PC-3 (cell line): ENCODE measurements at regions of chr5 and their contacts with region 1.

Region 1: GRCh38 chr5:81751009-81751835 is at the start of gene SSBP2:
- DNase-seq: peak; percentile 96
- ATAC-seq: peak; percentile 88
- H3K4me3 ChIP-seq: peak within 1 kb of the TSS; percentile 81
- H3K27ac ChIP-seq: peak within 1 kb of the TSS; percentile 65
- H3K4me1 ChIP-seq: peaks cover 18% of the 10 kb centered on the region
- H3K27me3 ChIP-seq: peaks cover 14% of the 10 kb centered on the region; the same call in 1 of the 2 replicates
- CTCF ChIP-seq: no peak
- total RNA-seq, gene SSBP2: 5.8 and 9.0 TPM in 2 replicates

Region 2: GRCh38 chr5:81334304-81335061 is 416.7 kb before region 1 on chr5:
- CTCF ChIA-PET with region 1: interaction called, 12 read pairs
- POLR2A ChIA-PET with region 1: no interaction called
- intact Hi-C with region 1: no loop called
- DNase-seq: no peak
- ATAC-seq: no peak
- H3K4me3 ChIP-seq: no peak overlapping the region
- H3K27ac ChIP-seq: no peak overlapping the region
- H3K4me1 ChIP-seq: no peaks in the 10 kb centered on the region
- H3K27me3 ChIP-seq: no peaks in the 10 kb centered on the region
- CTCF ChIP-seq: no peak

Region 3: DNA sequence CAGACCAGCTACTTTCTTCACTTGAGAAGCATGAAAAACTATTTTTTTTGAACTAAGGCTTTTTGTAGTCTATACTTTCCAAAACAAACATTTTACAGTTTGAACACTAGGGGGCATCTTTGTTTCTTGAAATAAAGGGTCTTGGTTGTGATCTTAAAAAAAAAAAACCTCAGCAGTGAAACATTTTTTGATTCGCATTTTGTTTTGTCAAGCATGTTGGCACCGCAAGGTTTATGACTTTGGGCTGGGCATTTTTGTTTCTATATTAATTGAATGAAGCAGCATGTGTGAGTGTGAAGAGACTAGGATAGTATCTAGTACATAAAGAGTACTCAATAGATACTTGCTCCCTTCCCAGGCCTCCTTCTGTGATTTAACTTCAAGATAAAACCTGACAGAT is 325.7 kb before region 1 on chr5:
- CTCF ChIA-PET with region 1: no interaction called
- POLR2A ChIA-PET with region 1: interaction called, 3 read pairs
- intact Hi-C with region 1: loop called (anchors 1 kb)
- DNase-seq: peak; percentile 52
- ATAC-seq: peak; percentile 7; the same call in 1 of the 2 replicates
- H3K4me3 ChIP-seq: no peak overlapping the region
- H3K27ac ChIP-seq: no peak overlapping the region
- H3K4me1 ChIP-seq: peaks cover 73% of the 10 kb centered on the region
- H3K27me3 ChIP-seq: no peaks in the 10 kb centered on the region
- CTCF ChIP-seq: peak; percentile 68

Region 4: GRCh38 chr5:81513982-81514381 is 237.2 kb before region 1 on chr5:
- CTCF ChIA-PET with region 1: no interaction called
- POLR2A ChIA-PET with region 1: no interaction called
- intact Hi-C with region 1: loop called (anchors 2 kb)
- DNase-seq: peak; percentile 34
- ATAC-seq: 0 out of 2 replicates have a peak, but pooled peaks have one; percentile 31
- H3K4me3 ChIP-seq: no peak overlapping the region
- H3K27ac ChIP-seq: no peak overlapping the region
- H3K4me1 ChIP-seq: no peaks in the 10 kb centered on the region; the same call in 1 of the 2 replicates
- H3K27me3 ChIP-seq: no peaks in the 10 kb centered on the region
- CTCF ChIP-seq: peak; percentile 53

Region 5: DNA sequence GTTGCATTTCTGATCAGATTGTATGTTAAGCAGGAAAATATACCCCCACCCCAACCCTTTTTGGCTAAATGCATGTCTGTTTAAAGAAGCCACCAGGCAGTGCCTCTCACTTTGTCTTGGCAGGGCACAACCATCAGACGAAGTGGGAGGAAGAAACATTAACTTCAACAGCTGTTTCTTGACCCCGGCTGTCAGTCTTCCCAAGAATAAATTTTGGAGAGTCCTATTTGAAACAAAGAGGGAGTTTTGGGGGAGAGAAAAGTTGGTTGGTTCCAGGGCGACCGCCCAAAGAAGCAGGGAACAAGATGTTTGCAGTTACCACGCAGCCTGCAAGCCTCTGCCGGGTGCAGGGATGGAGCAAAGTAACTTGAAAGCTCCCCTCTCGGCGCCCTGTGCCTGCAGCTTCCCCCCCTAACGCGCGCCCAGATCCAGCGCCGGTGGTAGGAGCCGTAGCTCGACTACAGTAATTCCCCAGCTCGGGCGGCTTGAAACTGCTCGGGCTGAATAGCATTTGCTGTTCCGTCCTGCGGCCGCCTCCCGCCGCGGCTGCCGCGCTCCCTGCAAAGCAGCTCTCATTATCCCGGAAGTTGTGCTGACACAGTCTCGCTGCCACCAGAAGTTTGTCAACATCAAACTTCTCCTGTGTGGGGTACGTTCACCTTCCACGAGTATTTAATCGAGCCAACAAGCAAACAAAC is 100.4 kb after region 1 on chr5:
- CTCF ChIA-PET with region 1: interaction called, 13 read pairs
- POLR2A ChIA-PET with region 1: interaction called, 9 read pairs
- intact Hi-C with region 1: loop called (anchors 1 kb)
- DNase-seq: peak; percentile 86
- ATAC-seq: peak; percentile 92
- H3K4me3 ChIP-seq: peak overlapping the region; percentile 67
- H3K27ac ChIP-seq: peak overlapping the region; percentile 71
- H3K4me1 ChIP-seq: peaks cover 10% of the 10 kb centered on the region
- H3K27me3 ChIP-seq: no peaks in the 10 kb centered on the region
- CTCF ChIP-seq: no peak

Region 6: GRCh38 chr5:82107267-82107666 is 356.0 kb after region 1 on chr5:
- CTCF ChIA-PET with region 1: no interaction called
- POLR2A ChIA-PET with region 1: no interaction called
- intact Hi-C with region 1: loop called (anchors 5 kb)
- DNase-seq: peak; percentile 30
- ATAC-seq: peak; percentile 56; the same call in 1 of the 2 replicates
- H3K4me3 ChIP-seq: no peak overlapping the region
- H3K27ac ChIP-seq: no peak overlapping the region
- H3K4me1 ChIP-seq: no peaks in the 10 kb centered on the region
- H3K27me3 ChIP-seq: no peaks in the 10 kb centered on the region
- CTCF ChIP-seq: peak; percentile 76

Region 7: DNA sequence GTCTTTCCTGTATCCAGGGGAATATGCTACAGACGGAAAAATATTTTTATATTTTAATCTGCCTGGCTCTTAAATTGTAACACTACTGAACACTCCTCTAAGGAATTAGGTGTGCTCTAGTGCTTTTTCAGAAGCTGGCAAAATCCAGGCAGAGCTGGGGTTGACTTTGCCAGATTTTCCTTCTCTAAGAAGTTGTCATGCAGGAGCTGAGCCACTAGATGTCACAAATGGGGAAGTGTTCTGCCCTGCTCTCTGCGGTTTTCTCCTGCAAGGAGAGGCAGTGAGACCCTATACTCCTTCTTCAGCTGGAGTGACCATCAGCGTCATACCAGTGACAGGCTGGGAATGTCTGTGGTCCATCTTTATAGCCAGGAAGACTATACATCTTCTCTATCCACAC is 1856.9 kb after region 1 on chr5:
- CTCF ChIA-PET with region 1: no interaction called
- POLR2A ChIA-PET with region 1: no interaction called
- intact Hi-C with region 1: loop called (anchors 1 kb)
- DNase-seq: peak; percentile 67
- ATAC-seq: peak; percentile 92
- H3K4me3 ChIP-seq: no peak overlapping the region
- H3K27ac ChIP-seq: no peak overlapping the region
- H3K4me1 ChIP-seq: no peaks in the 10 kb centered on the region
- H3K27me3 ChIP-seq: no peaks in the 10 kb centered on the region
- CTCF ChIP-seq: peak; percentile 68